IMR-90 (cell line): ENCODE measurements at regions of chr5 and their contacts with region 1.

Region 1: DNA sequence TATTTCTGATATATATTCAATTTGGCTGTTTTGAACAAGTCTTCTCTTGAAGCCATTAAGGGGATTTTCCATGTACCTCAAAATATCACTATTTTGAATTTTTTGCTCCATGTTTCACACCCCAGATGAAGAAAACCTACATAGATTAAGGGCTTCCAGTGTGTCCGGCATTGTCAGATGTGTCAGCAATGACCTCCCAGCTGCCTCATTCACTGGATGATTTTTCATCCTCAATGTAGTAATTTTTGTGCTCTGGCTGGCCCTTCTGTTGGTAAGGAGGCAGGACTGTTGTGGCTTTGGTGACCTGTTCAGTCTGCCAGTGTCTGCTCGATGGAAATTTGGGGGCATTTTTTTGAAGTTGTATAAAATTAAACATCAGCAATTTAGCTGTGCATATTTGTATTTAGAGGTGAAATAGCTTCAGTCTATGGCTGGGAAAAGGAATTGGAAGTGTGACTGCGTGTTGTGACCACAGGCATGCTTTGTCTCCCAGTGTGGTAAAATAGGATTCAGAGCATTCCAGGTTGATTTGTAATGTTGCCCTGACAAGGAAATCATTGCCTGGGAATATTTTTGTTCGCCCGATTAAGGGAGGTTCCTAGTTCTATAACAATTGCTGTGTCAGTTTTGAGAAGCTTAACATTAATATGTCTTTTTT is 312.4 kb downstream of the ARHGEF28 start:
- DNase-seq: peak; percentile 96
- ATAC-seq: peak; percentile 96
- H3K4me3 ChIP-seq: no peak overlapping the region
- H3K27ac ChIP-seq: peak overlapping the region; percentile 48
- H3K4me1 ChIP-seq: peaks cover 10% of the 10 kb centered on the region
- H3K27me3 ChIP-seq: no peaks in the 10 kb centered on the region
- CTCF ChIP-seq: no peak
- POLR2A ChIP-seq: no peak
- RAD21 ChIP-seq: no peak

Region 2: GRCh38 chr5:73644385-73644963 is 293.9 kb before region 1 on chr5:
- CTCF ChIA-PET with region 1: no interaction called
- POLR2A ChIA-PET with region 1: no interaction called
- dilution Hi-C with region 1: no loop called
- in situ Hi-C with region 1: no loop called
- intact Hi-C with region 1: no loop called
- DNase-seq: no peak
- ATAC-seq: no peak
- H3K4me3 ChIP-seq: no peak overlapping the region
- H3K27ac ChIP-seq: no peak overlapping the region
- H3K4me1 ChIP-seq: peaks cover 10% of the 10 kb centered on the region
- H3K27me3 ChIP-seq: no peaks in the 10 kb centered on the region
- CTCF ChIP-seq: no peak
- POLR2A ChIP-seq: no peak
- RAD21 ChIP-seq: no peak

Region 3: GRCh38 chr5:73917433-73917832 is 21.0 kb before region 1 on chr5:
- CTCF ChIA-PET with region 1: interaction called, 3 read pairs
- POLR2A ChIA-PET with region 1: interaction called, 11 read pairs
- dilution Hi-C with region 1: no loop called
- in situ Hi-C with region 1: no loop called
- intact Hi-C with region 1: no loop called
- DNase-seq: no peak
- ATAC-seq: no peak
- H3K4me3 ChIP-seq: no peak overlapping the region
- H3K27ac ChIP-seq: no peak overlapping the region
- H3K4me1 ChIP-seq: peaks cover 2% of the 10 kb centered on the region; the same call in 1 of the 2 replicates
- H3K27me3 ChIP-seq: no peaks in the 10 kb centered on the region
- CTCF ChIP-seq: no peak
- POLR2A ChIP-seq: no peak
- RAD21 ChIP-seq: no peak

Region 4: GRCh38 chr5:74035521-74035981 is 97.1 kb after region 1 on chr5:
- CTCF ChIA-PET with region 1: no interaction called
- POLR2A ChIA-PET with region 1: no interaction called
- dilution Hi-C with region 1: no loop called
- in situ Hi-C with region 1: no loop called
- intact Hi-C with region 1: no loop called
- DNase-seq: peak; percentile 69
- ATAC-seq: peak; percentile 61
- H3K4me3 ChIP-seq: no peak overlapping the region
- H3K27ac ChIP-seq: no peak overlapping the region
- H3K4me1 ChIP-seq: no peaks in the 10 kb centered on the region; the same call in 1 of the 2 replicates
- H3K27me3 ChIP-seq: peaks cover 6% of the 10 kb centered on the region
- CTCF ChIP-seq: peak; percentile 48
- POLR2A ChIP-seq: no peak
- RAD21 ChIP-seq: peak; percentile 65

Region 5: DNA sequence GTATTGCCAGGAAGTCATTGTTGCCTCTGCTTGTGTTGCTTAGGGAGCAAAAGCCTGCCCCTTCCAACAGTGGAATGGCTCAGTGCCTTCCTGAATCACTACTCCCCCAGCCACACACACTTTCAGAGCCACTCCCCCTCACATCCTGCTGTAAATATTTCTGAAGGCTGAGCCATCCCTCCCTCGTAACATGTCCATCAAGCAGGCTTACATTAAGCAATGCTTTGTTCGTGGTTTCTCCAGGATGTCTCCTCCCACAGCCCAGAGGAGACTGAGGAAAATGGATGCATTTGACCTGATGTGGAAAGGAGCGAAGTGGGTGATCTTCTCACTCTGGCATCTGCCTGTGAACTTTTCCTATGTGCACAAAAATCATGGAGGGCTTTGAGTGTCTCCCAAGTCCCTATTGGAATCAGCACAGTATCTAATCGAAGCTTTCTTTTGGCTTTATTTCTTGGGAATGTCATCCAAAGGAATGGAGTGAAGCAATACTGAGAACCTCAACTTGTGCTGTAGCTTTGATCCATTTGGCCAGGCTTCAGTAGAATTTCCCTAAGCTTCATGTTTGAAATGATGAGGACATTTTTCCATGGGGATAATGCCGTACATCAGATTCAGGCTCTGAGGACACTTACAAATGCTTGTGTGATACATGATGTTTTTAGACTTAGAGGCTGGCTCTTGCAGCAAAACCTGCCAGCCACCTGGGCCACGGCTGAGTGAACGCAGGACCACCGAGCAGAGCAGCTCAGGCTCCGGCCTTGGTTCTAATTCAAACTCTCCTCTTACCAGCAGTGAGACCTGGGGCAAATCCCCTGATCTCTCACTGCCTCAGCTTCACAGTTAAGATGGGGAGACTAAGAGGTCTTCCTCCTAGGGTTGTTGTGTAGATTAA is 313.0 kb after region 1 on chr5:
- CTCF ChIA-PET with region 1: no interaction called
- POLR2A ChIA-PET with region 1: no interaction called
- dilution Hi-C with region 1: no loop called
- in situ Hi-C with region 1: no loop called
- intact Hi-C with region 1: loop called (anchors 10 kb)
- DNase-seq: peak; percentile 96
- ATAC-seq: peak; percentile 93
- H3K4me3 ChIP-seq: no peak overlapping the region
- H3K27ac ChIP-seq: peak overlapping the region; percentile 6
- H3K4me1 ChIP-seq: peaks cover 6% of the 10 kb centered on the region
- H3K27me3 ChIP-seq: no peaks in the 10 kb centered on the region
- CTCF ChIP-seq: no peak
- POLR2A ChIP-seq: no peak
- RAD21 ChIP-seq: peak; percentile 10